AG04450 (cell line): ENCODE measurements at regions of chr3 and their contacts with region 1.

Region 1: GRCh38 chr3:149812606-149813366 is at the start of gene RNF13:
- DNase-seq: peak; percentile 86
- H3K4me3 ChIP-seq: peak within 1 kb of the TSS; percentile 86
- H3K27ac ChIP-seq: peak within 1 kb of the TSS; percentile 97
- H3K27me3 ChIP-seq: no peaks in the 10 kb centered on the region
- CTCF ChIP-seq: no peak
- polyA plus RNA-seq, gene RNF13: 31.4 and 46.3 TPM in 2 replicates

Region 2: DNA sequence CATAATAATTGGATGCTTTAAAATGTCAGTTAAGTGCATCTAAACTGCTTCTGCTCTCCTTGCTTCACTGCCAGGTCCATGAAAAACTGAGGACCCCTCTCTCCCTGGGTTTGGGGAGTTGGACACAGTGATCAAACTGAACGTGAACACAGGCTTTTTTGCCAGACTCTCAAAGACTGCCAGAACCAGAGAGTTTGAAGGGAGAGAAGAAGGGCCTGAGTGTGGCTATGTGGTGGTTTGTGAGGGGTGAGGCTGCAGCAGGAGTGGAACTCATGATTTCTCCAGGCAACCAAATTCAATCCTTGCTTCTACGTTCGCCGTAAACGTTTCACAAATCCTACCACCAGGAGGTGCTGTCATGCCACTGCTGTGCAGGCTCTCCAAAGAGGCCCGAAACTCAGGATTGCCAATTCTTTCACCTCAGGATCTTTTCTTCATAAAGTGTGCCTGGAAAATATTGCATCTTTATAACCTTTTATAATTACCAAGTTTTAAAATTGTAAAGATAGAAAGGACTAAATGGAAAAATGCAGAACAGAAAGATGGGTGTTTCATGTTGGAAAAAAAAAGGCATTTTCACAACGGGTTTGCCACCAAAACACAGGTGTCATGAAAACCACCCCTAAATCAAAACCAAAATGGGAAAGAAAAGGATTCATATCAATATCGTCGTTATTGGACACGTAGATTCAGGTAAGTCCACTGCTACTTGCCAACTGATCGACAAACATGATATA is 318.6 kb before region 1 on chr3:
- CTCF ChIA-PET with region 1: interaction called, 39 read pairs
- POLR2A ChIA-PET with region 1: no interaction called
- DNase-seq: no peak
- H3K4me3 ChIP-seq: no peak overlapping the region
- H3K27ac ChIP-seq: no peak overlapping the region
- H3K27me3 ChIP-seq: no peaks in the 10 kb centered on the region
- CTCF ChIP-seq: peak; percentile 92

Region 3: GRCh38 chr3:149717391-149718056 is 95.3 kb before region 1 on chr3:
- CTCF ChIA-PET with region 1: interaction called, 12 read pairs
- POLR2A ChIA-PET with region 1: no interaction called
- DNase-seq: peak; percentile 45
- H3K4me3 ChIP-seq: no peak overlapping the region
- H3K27ac ChIP-seq: no peak overlapping the region
- H3K27me3 ChIP-seq: no peaks in the 10 kb centered on the region
- CTCF ChIP-seq: peak; percentile 80

Region 4: DNA sequence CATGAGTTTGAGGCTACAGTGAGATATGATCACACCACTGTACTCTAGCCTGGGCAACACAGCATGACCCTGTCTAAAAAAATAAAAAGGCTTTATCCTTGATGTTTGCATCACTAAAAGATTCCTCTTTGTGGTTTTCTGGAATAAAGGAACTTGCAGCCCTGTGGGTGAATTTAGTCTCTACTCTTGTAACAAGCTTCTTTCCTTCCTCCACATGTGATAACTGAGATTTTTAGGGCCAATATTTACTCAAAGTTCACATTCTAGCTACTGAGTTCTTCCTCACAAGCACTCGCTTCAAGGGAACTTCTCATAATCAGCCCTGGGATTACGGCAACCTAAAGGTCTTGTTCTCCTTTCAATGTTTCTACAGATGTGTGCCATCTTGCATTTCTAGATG is 85.1 kb before region 1 on chr3:
- CTCF ChIA-PET with region 1: no interaction called
- POLR2A ChIA-PET with region 1: no interaction called
- DNase-seq: no peak
- H3K4me3 ChIP-seq: no peak overlapping the region
- H3K27ac ChIP-seq: no peak overlapping the region
- H3K27me3 ChIP-seq: no peaks in the 10 kb centered on the region
- CTCF ChIP-seq: no peak

Region 5: DNA sequence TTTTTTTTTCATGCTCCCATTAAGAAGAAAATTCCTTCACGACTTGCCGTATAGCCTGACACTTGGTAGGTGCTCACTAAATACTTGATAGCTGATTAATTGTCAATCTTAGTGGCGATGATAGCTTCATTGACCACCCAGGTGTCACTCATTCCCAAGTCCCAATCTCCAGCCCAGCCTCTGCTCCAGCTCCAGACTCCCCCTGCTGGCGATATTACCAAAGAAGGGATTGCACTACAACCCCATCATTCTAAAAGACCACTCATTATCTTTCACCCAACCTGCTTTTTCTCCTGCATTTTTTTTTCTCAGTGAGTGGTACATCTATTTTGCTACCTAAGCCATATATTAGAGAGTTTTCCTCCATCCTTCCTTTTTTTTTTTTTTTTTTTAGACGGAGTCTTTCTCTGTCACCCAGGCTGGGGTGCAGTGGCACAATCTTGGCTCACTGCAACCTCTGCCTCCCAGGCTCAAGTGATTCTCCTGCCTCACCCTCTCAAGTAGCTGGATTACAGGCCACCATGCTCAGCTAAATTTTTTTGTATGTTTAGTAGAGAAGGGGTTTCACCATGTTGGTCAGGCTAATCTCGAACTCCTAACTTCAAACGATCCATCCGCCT is 41.0 kb before region 1 on chr3:
- CTCF ChIA-PET with region 1: interaction called, 400 read pairs
- POLR2A ChIA-PET with region 1: interaction called, 6 read pairs
- DNase-seq: no peak
- H3K4me3 ChIP-seq: no peak overlapping the region
- H3K27ac ChIP-seq: no peak overlapping the region
- H3K27me3 ChIP-seq: peaks cover 5% of the 10 kb centered on the region
- CTCF ChIP-seq: peak; percentile 85

Region 6: DNA sequence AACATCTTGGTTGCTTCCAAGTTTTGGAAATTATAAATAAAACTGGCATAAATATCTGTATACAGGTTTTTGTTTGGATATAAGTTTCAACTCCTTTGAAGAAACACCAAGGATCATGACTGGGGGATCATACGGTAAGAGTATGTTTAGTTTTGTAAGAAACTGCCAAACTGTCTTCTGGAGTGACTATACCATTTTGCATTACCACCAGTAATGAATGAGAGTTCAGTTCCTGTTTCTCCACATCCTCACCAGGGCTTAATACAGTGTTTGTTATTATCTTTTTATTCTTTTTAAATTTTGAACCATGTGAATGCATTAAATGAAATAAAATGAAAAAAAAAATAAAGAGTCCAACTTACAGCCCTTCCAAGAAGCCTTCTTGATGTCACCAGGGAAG is 16.8 kb before region 1 on chr3:
- CTCF ChIA-PET with region 1: interaction called, 30 read pairs
- POLR2A ChIA-PET with region 1: no interaction called
- DNase-seq: no peak
- H3K4me3 ChIP-seq: no peak overlapping the region
- H3K27ac ChIP-seq: no peak overlapping the region
- H3K27me3 ChIP-seq: no peaks in the 10 kb centered on the region
- CTCF ChIP-seq: no peak

Region 7: DNA sequence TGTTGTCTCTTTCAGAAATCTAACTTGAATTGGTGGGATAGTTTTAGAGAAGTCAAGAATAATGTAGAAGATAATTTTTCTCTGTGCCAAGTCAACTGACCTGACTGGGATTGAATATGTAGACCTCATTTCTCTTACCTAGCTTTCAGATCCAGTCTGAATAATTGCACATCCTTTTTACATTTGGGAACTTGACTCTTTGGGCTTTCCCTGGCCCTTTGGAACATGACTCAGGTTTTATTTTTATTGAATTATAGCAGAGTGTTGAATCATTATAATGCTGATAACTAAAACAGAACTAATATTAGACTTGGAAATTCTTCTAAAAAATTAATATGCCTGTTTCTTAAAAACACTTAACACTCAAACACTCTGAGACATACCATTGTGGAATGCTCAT is 81.4 kb after region 1 on chr3:
- CTCF ChIA-PET with region 1: interaction called, 10 read pairs
- POLR2A ChIA-PET with region 1: no interaction called
- DNase-seq: no peak
- H3K4me3 ChIP-seq: no peak overlapping the region
- H3K27ac ChIP-seq: no peak overlapping the region
- H3K27me3 ChIP-seq: no peaks in the 10 kb centered on the region
- CTCF ChIP-seq: no peak

Region 8: DNA sequence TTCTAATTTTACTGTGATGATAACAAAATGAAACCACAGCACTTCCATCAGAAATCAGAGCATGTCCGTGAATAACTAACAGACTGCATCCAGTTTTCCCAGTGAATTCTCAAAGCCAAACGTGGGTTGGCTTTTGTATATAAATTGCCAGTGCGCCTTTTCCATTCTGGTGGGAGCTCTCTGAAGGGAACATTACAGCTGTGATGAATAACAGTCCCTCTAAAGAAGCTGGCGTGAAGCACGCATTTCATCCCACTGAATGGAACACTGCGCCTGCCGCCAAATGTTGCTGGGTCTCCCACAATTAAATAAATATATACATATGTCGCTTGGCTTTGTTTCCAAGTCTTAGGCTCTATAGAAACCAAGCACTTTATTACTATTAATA is 270.9 kb after region 1 on chr3:
- CTCF ChIA-PET with region 1: no interaction called
- POLR2A ChIA-PET with region 1: no interaction called
- DNase-seq: no peak
- H3K4me3 ChIP-seq: peak overlapping the region; percentile 41
- H3K27ac ChIP-seq: peak overlapping the region; percentile 47
- H3K27me3 ChIP-seq: no peaks in the 10 kb centered on the region
- CTCF ChIP-seq: no peak

Region 9: DNA sequence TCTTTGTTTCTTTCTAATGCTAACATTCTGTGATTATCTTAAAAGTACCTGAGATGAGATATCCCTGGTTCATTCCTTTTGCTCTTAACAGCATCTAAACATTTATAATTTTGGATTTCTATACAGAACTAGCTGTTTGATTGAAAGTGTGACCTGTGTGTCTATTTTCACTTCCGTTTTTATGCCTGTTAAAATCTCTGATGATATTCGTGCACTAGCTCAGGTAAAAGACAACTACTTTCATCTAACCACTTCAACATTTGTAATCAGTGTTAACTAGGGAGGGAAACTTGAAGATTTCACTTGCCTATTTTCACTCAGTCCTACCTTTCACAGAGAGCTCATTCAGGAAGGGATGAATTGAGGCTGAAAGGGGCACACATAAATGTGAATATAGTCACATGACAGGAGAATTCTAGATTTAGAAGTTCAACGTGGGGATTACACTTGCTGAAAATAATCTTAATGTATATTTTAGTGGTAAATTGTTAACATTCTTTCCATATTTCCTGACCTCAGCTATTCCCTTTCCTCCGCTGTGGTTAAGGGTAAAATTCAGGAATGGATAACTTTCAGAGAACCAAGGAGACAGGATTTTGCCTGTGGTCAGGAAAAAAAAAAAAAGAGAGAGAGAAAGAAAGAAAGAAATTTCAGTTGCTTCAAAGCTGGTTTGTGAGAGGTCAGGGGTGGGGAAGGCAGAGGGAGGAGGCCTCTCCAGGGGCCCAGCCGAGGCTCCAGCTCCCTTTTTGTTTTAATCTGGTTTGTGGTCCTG is 435.5 kb after region 1 on chr3:
- CTCF ChIA-PET with region 1: no interaction called
- POLR2A ChIA-PET with region 1: no interaction called
- DNase-seq: peak; percentile 89
- H3K4me3 ChIP-seq: no peak overlapping the region
- H3K27ac ChIP-seq: peak overlapping the region; percentile 82
- H3K27me3 ChIP-seq: no peaks in the 10 kb centered on the region
- CTCF ChIP-seq: no peak